ENCODE measurements at regions of chr17 and their contacts with region 1.

Region 1: GRCh38 chr17:27654654-27655524 is 23.9 kb downstream of the LGALS9 start:
- DNase-seq: peak; percentile 92 to 94
- ATAC-seq: peak; percentile 79 to 97
- H3K4me3 ChIP-seq: no peak overlapping the region
- H3K27ac ChIP-seq: peak overlapping the region in 1 of 2 experiments; percentile 35; a peak in 1 of 6 replicates
- H3K4me1 ChIP-seq: no peaks in the 10 kb centered on the region
- CTCF ChIP-seq: peak; percentile 100
- EP300 ChIP-seq: no peak
- POLR2A ChIP-seq: no peak
- RAD21 ChIP-seq: peak; percentile 68 to 88

Region 2: DNA sequence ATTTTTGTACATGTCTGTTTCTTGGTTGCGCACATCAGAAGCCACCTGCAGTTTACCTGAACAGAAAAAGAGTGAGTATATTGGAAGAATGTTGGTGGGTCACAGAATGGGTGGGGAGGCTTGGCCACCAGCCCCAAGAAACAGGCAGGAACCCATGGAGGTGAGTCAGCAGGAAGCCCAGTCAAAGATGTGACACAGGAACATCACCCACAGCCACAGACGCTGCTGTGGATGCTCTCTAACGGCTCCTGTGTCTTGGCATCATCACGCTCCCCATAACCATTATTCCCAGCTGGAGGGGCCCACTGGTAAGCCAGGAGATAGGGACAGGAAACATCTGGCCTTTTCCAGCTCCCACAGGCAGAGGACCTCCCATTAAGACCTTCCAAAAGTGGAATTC is 454.9 kb before region 1 on chr17:
- CTCF ChIA-PET with region 1: interaction called, 14 read pairs
- POLR2A ChIA-PET with region 1: no interaction called
- DNase-seq: no peak
- ATAC-seq: no peak
- H3K4me3 ChIP-seq: no peak overlapping the region
- H3K27ac ChIP-seq: no peak overlapping the region
- H3K4me1 ChIP-seq: no peaks in the 10 kb centered on the region
- CTCF ChIP-seq: no peak
- EP300 ChIP-seq: no peak
- POLR2A ChIP-seq: no peak
- RAD21 ChIP-seq: no peak

Region 3: GRCh38 chr17:27396941-27397340 is 257.9 kb before region 1 on chr17:
- CTCF ChIA-PET with region 1: no interaction called
- POLR2A ChIA-PET with region 1: no interaction called
- DNase-seq: no peak
- ATAC-seq: no peak
- H3K4me3 ChIP-seq: no peak overlapping the region
- H3K27ac ChIP-seq: no peak overlapping the region
- H3K4me1 ChIP-seq: no peaks in the 10 kb centered on the region
- CTCF ChIP-seq: no peak
- EP300 ChIP-seq: no peak
- POLR2A ChIP-seq: no peak
- RAD21 ChIP-seq: no peak

Region 4: GRCh38 chr17:27609611-27610303 is 45.1 kb before region 1 on chr17:
- CTCF ChIA-PET with region 1: interaction called, 374 read pairs
- POLR2A ChIA-PET with region 1: no interaction called
- DNase-seq: peak; percentile 46 to 53
- ATAC-seq: peak; percentile 82 to 88
- H3K4me3 ChIP-seq: no peak overlapping the region
- H3K27ac ChIP-seq: no peak overlapping the region
- H3K4me1 ChIP-seq: peaks cover 10% of the 10 kb centered on the region
- CTCF ChIP-seq: peak; percentile 44
- EP300 ChIP-seq: no peak
- POLR2A ChIP-seq: no peak
- RAD21 ChIP-seq: peak; percentile 46 to 70

Region 5: GRCh38 chr17:27631411-27631760 is 23.5 kb before region 1 on chr17:
- CTCF ChIA-PET with region 1: interaction called, 23 read pairs
- POLR2A ChIA-PET with region 1: no interaction called
- DNase-seq: no peak
- ATAC-seq: peak in 1 of 2 experiments; percentile 16; a peak in 2 of 6 replicates
- H3K4me3 ChIP-seq: no peak overlapping the region
- H3K27ac ChIP-seq: no peak overlapping the region
- H3K4me1 ChIP-seq: no peaks in the 10 kb centered on the region
- CTCF ChIP-seq: no peak
- EP300 ChIP-seq: no peak
- POLR2A ChIP-seq: no peak
- RAD21 ChIP-seq: no peak

Region 6: GRCh38 chr17:27666831-27667560 is 12.1 kb after region 1 on chr17:
- CTCF ChIA-PET with region 1: interaction called, 118 read pairs
- POLR2A ChIA-PET with region 1: no interaction called
- DNase-seq: no peak
- ATAC-seq: no peak
- H3K4me3 ChIP-seq: no peak overlapping the region
- H3K27ac ChIP-seq: no peak overlapping the region
- H3K4me1 ChIP-seq: no peaks in the 10 kb centered on the region
- CTCF ChIP-seq: no peak
- EP300 ChIP-seq: no peak
- POLR2A ChIP-seq: no peak
- RAD21 ChIP-seq: no peak

Region 7: GRCh38 chr17:27733773-27734172 is 78.9 kb after region 1 on chr17:
- CTCF ChIA-PET with region 1: interaction called, 33 read pairs
- POLR2A ChIA-PET with region 1: no interaction called
- DNase-seq: peak in 1 of 2 experiments; percentile 14
- ATAC-seq: peak in 1 of 2 experiments; percentile 48; a peak in 1 of 6 replicates
- H3K4me3 ChIP-seq: no peak overlapping the region
- H3K27ac ChIP-seq: no peak overlapping the region
- H3K4me1 ChIP-seq: no peaks in the 10 kb centered on the region
- CTCF ChIP-seq: no peak
- EP300 ChIP-seq: no peak
- POLR2A ChIP-seq: no peak
- RAD21 ChIP-seq: no peak

Region 8: DNA sequence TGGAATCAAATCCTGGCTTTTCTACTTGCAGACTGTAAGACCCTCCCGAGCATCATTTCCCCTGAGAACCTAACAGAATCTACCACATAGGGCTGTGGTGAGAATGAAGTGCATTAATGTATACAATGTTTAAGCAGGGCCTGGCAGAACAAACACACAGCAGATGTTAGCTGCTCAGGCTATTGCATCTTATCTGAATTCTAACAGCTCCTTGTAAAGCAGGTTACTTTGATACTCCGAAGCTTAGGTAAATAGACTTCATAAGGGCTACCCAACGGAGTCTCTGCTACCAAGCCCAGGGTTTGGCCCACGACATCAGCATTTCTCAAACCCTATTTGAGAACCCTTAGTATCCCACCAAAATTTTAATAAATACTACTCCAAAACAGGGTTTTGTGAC is 169.9 kb after region 1 on chr17:
- CTCF ChIA-PET with region 1: no interaction called
- POLR2A ChIA-PET with region 1: no interaction called
- DNase-seq: no peak
- ATAC-seq: no peak; a peak in 1 of 6 replicates
- H3K4me3 ChIP-seq: no peak overlapping the region
- H3K27ac ChIP-seq: no peak overlapping the region
- H3K4me1 ChIP-seq: no peaks in the 10 kb centered on the region
- CTCF ChIP-seq: no peak
- EP300 ChIP-seq: no peak
- POLR2A ChIP-seq: no peak
- RAD21 ChIP-seq: no peak

Region 9: DNA sequence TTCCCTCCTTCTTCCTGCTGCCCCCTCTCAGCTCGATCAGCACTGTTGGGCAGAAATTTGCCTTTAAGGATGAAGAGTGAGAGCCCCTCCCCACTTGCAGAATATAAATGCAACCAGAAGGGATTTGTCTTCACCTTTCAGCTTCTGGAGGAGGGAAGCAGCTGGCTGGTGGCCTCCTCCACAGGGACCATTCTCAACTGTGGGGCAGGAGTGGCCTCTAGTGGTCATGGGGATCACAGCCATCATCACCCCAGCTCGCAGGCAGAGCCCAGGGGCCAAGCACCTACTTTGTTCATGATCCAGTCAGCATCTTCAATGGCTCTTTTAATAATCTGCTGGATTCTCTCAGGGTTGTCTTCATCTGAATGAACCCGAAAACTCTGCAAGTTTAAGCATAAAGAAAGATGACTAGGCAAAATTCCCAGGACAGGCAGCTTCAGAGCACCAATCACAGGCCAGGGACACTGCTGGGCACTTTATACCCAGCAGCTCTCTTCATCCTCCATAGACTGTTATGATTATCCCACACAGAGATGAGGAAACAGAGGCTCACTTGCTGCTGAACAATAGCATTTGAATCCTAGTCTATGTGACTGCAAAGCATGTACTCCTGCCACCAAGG is 225.2 kb after region 1 on chr17:
- CTCF ChIA-PET with region 1: interaction called, 230 read pairs
- POLR2A ChIA-PET with region 1: no interaction called
- DNase-seq: peak; percentile 70 to 90
- ATAC-seq: peak; percentile 94 to 98
- H3K4me3 ChIP-seq: no peak overlapping the region
- H3K27ac ChIP-seq: no peak overlapping the region
- H3K4me1 ChIP-seq: no peaks in the 10 kb centered on the region
- CTCF ChIP-seq: peak; percentile 97
- EP300 ChIP-seq: no peak
- POLR2A ChIP-seq: no peak
- RAD21 ChIP-seq: peak; percentile 97 to 98

Measured in A549 (cell line).